ENCODE measurements at regions of chr4 and their contacts with region 1.

Region 1: GRCh38 chr4:27861381-27862201 is 1001.0 kb downstream of the STIM2 start:
- DNase-seq: peak; percentile 83
- H3K4me3 Mint-ChIP-seq: no peak overlapping the region
- H3K27ac Mint-ChIP-seq: no peak overlapping the region
- H3K4me1 Mint-ChIP-seq: peaks cover 11% of the 10 kb centered on the region
- H3K27me3 Mint-ChIP-seq: no peaks in the 10 kb centered on the region
- CTCF ChIP-seq: peak; percentile 66

Region 2: GRCh38 chr4:27692158-27692557 is 169.4 kb before region 1 on chr4:
- CTCF ChIA-PET with region 1: interaction called, 4 read pairs
- POLR2A ChIA-PET with region 1: no interaction called
- intact Hi-C with region 1: loop called (anchors 1 kb)
- DNase-seq: peak; percentile 57
- H3K4me3 Mint-ChIP-seq: no peak overlapping the region
- H3K27ac Mint-ChIP-seq: no peak overlapping the region
- H3K4me1 Mint-ChIP-seq: peaks cover 5% of the 10 kb centered on the region
- H3K27me3 Mint-ChIP-seq: no peaks in the 10 kb centered on the region
- CTCF ChIP-seq: peak; percentile 60

Region 3: GRCh38 chr4:27791640-27792039 is 70.0 kb before region 1 on chr4:
- CTCF ChIA-PET with region 1: no interaction called
- POLR2A ChIA-PET with region 1: no interaction called
- intact Hi-C with region 1: no loop called
- DNase-seq: peak; percentile 86
- H3K4me3 Mint-ChIP-seq: no peak overlapping the region
- H3K27ac Mint-ChIP-seq: peak overlapping the region; percentile 8
- H3K4me1 Mint-ChIP-seq: peaks cover 34% of the 10 kb centered on the region
- H3K27me3 Mint-ChIP-seq: no peaks in the 10 kb centered on the region
- CTCF ChIP-seq: no peak

Region 4: DNA sequence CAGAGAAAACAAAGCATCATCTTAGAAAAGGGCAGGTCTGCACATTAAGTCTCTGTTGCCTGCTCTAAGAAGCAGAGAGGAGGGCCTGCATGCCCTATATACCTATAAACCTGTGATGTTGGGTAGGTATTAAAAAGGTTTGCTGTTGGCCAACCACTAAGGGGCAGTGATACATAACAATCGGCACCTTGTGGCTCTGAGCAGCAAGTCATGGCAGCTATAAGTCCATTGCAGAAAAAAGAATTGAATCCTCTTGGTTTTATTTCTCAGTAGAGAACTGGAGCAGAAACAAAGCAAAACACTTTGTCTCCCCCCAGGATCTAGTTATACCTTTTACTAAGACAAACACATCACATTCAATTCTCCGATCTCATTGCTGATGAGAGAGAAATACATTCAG is 363.5 kb after region 1 on chr4:
- CTCF ChIA-PET with region 1: interaction called, 3 read pairs
- POLR2A ChIA-PET with region 1: no interaction called
- intact Hi-C with region 1: loop called (anchors 1 kb)
- DNase-seq: peak; percentile 54
- H3K4me3 Mint-ChIP-seq: no peak overlapping the region
- H3K27ac Mint-ChIP-seq: no peak overlapping the region
- H3K4me1 Mint-ChIP-seq: no peaks in the 10 kb centered on the region
- H3K27me3 Mint-ChIP-seq: no peaks in the 10 kb centered on the region
- CTCF ChIP-seq: peak; percentile 49

Region 5: GRCh38 chr4:28357990-28358389 is 496.4 kb after region 1 on chr4:
- CTCF ChIA-PET with region 1: no interaction called
- POLR2A ChIA-PET with region 1: no interaction called
- intact Hi-C with region 1: loop called (anchors 5 kb)
- DNase-seq: peak; percentile 14
- H3K4me3 Mint-ChIP-seq: no peak overlapping the region
- H3K27ac Mint-ChIP-seq: no peak overlapping the region
- H3K4me1 Mint-ChIP-seq: no peaks in the 10 kb centered on the region
- H3K27me3 Mint-ChIP-seq: no peaks in the 10 kb centered on the region
- CTCF ChIP-seq: no peak